ENCODE measurements at regions of chr12 and their contacts with region 1.

Region 1: DNA sequence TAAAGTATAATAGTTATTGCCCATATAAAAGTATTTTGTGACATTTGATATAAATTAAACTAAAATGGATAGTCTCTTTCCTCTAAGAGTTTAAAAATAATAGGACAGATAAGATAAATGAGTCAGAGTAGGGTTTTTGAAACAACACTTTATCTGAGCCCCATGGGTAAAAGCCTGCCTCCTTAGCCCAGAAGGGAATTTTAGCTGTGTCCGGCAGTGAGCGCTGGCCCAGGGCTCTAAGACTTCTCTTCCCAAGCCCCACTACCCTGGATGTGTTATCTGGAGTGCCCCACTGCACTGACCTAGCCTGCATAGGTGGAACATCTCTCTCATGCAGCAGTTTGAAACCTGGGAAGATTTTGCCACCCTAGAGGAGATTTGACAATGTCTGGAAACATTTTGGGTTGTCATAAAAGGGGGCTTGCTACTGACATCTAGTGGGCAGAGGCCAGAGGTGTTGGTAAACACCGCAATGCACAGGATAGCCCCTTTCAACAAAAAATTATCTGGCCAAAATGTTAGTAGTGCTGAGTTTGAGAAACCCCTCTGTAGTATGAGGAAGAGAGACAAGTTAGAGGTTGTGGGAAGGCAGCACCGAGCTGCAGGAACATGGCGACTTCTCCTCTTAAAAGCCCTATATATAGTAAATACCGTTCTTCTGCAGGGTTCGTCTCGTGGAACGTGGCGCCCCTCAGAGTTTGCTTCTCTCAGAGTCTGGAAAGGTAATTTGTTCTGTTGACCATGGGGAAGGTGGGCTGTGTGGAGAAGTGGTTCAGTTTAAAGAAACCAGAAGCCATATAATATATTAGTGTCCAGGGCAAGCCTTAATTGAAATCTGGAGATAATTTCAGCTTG is 29.3 kb upstream of the ATF1 start:
- H3K4me3 ChIP-seq: no peak overlapping the region
- H3K27ac ChIP-seq: no peak overlapping the region
- H3K4me1 ChIP-seq: no peaks in the 10 kb centered on the region
- CTCF ChIP-seq: peak; percentile 69

Region 2: GRCh38 chr12:50720085-50720484 is 14.6 kb before region 1 on chr12:
- CTCF ChIA-PET with region 1: interaction called, 12 read pairs
- POLR2A ChIA-PET with region 1: no interaction called
- H3K4me3 ChIP-seq: no peak overlapping the region
- H3K27ac ChIP-seq: no peak overlapping the region
- H3K4me1 ChIP-seq: peaks cover 4% of the 10 kb centered on the region
- CTCF ChIP-seq: no peak